ENCODE measurements at regions of chr17 and their contacts with region 1.

Region 1: DNA sequence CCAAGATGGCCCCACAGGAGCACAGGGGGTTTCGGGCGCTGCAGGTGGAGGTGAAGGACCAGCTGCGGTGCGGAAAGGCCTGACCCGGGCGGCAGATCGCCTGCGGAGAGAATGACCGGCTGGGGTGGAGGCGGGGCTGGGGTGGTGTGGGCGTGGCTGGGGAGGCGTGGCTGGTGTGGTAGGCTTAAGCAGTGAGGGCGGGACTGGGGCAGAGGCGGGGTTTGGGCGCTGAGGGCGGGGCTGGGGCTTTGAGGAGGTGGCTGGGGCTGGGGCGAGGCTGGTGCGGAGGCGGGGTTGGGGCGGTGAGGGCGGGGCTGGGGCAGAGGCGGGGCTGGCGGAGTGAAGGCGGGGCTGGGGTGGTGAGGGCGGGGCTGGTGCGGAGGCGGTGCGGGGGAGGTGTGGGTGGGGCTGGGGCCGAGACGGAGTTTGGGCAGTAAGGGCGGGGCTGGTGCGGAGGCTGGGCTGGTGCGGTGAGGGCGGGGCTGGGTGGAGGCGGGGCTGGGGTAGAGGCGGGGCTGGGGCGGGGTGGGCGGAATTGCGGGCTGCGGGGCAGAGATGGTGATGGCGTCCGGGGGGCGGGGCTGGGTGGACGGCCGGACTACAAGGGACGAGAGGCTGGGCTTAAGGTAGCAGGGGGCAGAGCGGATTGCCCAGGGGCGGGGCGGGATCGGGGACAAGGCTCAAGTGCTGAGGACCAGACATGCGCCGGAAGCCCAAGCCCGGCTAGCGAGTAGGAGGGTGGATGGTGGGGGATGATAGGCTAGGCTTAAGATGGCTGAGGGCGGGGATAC is 9.9 kb upstream of the GSDMA start:
- DNase-seq: peak; percentile 97 to 99 (median 98)
- ATAC-seq: peak; percentile 97
- H3K4me3 ChIP-seq: peak overlapping the region; percentile 41
- H3K27ac ChIP-seq: peak overlapping the region; percentile 51; the same call in 1 of the 3 replicates
- H3K4me1 ChIP-seq: peaks cover 13 to 18% of the 10 kb centered on the region in 2 experiments; a peak in 4 of 5 replicates
- H3K27me3 ChIP-seq: no peaks in the 10 kb centered on the region
- CTCF ChIP-seq: no peak
- EP300 ChIP-seq: no peak
- POLR2A ChIP-seq: no peak; the same call in none of the 2 replicates
- RAD21 ChIP-seq: no peak

Region 2: GRCh38 chr17:39927101-39927928 is 25.6 kb before region 1 on chr17 and contains the starts of genes LRRC3C and ORMDL3:
- CTCF ChIA-PET with region 1: no interaction called
- POLR2A ChIA-PET with region 1: no interaction called
- in situ Hi-C with region 1: no loop called
- intact Hi-C with region 1: loop called (anchors 2 kb)
- DNase-seq: peak; percentile 91 to 96 (median 92)
- ATAC-seq: peak; percentile 87
- H3K4me3 ChIP-seq: peak within 1 kb of the TSS; percentile 97
- H3K27ac ChIP-seq: peak within 1 kb of the TSS; percentile 76
- H3K4me1 ChIP-seq: peaks cover 27 to 43% of the 10 kb centered on the region in 2 experiments
- H3K27me3 ChIP-seq: no peaks in the 10 kb centered on the region
- CTCF ChIP-seq: no peak
- EP300 ChIP-seq: peak; percentile 7; the same call in 1 of the 2 replicates
- POLR2A ChIP-seq: peak; percentile 70
- RAD21 ChIP-seq: no peak
- polyA plus RNA-seq, gene LRRC3C: not detected
- polyA plus RNA-seq, gene ORMDL3: 2.7 to 4.6 TPM

Measured in K562 (cell line).